ENCODE measurements at regions of chr16 and their contacts with region 1.

Region 1: GRCh38 chr16:1216296-1216619 is 8.8 kb downstream of the TPSG1 start:
- DNase-seq: no peak
- H3K4me3 ChIP-seq: no peak overlapping the region
- H3K27ac ChIP-seq: no peak overlapping the region
- H3K4me1 ChIP-seq: no peaks in the 10 kb centered on the region
- H3K27me3 ChIP-seq: no peaks in the 10 kb centered on the region
- CTCF ChIP-seq: no peak
- POLR2A ChIP-seq: no peak

Region 2: DNA sequence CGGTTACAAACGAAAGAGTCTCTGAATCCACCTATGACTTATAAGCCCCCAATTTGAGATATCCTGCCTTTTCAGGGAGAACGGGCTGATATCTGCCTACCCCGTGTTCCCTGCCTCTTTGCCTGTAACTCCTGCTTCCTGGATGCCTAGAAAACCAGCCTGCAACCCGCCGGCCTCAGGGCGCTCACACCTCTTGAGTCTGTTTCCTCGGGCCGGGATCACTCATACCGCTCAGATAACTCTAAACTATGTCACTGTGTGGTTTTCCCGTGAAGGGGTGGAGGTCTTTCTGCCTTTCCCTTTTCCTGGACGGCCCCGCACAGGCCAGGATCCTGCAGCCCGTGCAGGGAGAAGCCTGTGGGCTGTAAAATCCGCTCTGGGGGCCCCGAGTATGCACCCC is 438.4 kb before region 1 on chr16:
- intact Hi-C with region 1: no loop called
- DNase-seq: no peak
- H3K4me3 ChIP-seq: no peak overlapping the region
- H3K27ac ChIP-seq: no peak overlapping the region
- H3K4me1 ChIP-seq: no peaks in the 10 kb centered on the region
- H3K27me3 ChIP-seq: peaks cover 12% of the 10 kb centered on the region
- CTCF ChIP-seq: no peak
- POLR2A ChIP-seq: no peak

Region 3: GRCh38 chr16:1492923-1493745 is 276.9 kb after region 1 on chr16 and contains the start of gene TELO2:
- intact Hi-C with region 1: no loop called
- DNase-seq: peak; percentile 82
- H3K4me3 ChIP-seq: peak within 1 kb of the TSS; percentile 71 to 85
- H3K27ac ChIP-seq: peak within 1 kb of the TSS; percentile 75 to 83
- H3K4me1 ChIP-seq: peaks cover 8% of the 10 kb centered on the region
- H3K27me3 ChIP-seq: no peaks in the 10 kb centered on the region
- CTCF ChIP-seq: peak in 1 of 4 experiments; percentile 5
- POLR2A ChIP-seq: peak; percentile 41
- total RNA-seq, gene TELO2: 35.1 to 53.5 TPM

Region 4: GRCh38 chr16:1763521-1764511 is 547.6 kb after region 1 on chr16:
- intact Hi-C with region 1: loop called (anchors 10 kb)
- DNase-seq: no peak
- H3K4me3 ChIP-seq: no peak overlapping the region
- H3K27ac ChIP-seq: no peak overlapping the region
- H3K4me1 ChIP-seq: no peaks in the 10 kb centered on the region
- H3K27me3 ChIP-seq: no peaks in the 10 kb centered on the region
- CTCF ChIP-seq: peak in 2 of 4 experiments; percentile 38 to 52
- POLR2A ChIP-seq: no peak